Activated CD4-positive, alpha-beta T cell treated with anti-CD3 and anti-CD28 coated beads for 36 hours (primary cell): ENCODE measurements at regions of chr5 and their contacts with region 1.

Region 1: DNA sequence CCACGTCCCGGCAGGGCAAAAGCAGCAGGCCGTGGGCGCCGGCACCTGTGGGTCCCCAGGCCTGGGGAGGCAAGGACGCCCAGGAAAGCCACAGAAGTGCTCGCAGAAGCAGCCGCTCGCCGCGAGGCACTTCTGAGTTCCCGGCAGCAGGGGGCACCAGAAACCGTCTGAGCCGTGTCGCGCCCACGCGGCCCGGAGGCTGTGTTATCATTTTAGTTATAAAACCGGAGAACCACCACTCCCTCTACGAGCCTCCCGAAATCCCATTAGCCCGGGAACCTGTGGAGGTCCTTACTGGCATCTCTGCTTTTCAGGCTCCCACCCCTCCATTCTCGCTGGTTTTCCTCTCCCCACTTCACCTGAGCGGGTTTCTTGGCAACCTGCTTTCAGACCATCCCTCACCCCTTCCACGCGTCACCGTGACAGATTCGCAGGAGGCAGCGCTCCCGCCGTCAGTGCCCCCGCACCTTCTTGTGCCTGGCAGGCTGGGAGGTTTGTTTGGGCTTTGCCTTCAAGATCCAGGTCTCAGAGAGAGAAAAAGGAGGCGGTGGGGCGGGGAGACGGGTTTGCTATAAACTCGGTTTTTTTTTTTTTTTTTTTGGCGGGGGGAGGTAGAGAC is 2.3 kb downstream of the GDNF start:
- DNase-seq: peak; percentile 90
- ATAC-seq: peak; percentile 69
- H3K4me3 Mint-ChIP-seq: peak overlapping the region; percentile 55
- H3K27ac Mint-ChIP-seq: no peak overlapping the region
- H3K4me1 Mint-ChIP-seq: peaks cover 28% of the 10 kb centered on the region
- H3K27me3 Mint-ChIP-seq: peaks cover 77% of the 10 kb centered on the region

Region 2: DNA sequence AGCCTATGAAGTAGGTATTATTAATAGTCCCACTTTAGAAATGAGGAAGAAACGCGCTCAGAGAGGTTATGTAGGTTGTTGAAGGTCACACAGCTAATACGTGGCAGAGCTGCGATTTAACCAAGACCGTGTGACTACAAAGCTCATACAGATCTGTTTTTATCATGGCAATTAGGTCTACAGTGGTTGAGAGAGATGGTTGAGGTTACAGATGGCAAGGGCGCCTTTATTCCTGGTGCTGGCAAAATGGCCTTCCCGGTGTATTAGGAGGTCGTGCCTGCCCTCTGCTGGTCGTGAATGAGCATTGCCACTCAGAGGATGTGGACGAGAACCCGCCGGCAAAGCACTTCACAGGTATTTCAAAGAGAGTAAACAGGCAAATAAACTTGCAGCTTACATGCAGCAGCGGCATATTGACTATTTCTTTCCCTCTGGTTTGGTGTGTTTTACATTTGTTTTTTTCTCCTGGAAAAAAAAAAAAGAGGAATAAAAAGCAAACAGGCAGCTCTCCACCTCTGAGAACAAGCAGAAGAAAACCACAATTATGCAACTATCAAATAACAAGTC is 355.6 kb after region 1 on chr5:
- CTCF ChIA-PET with region 1: interaction called, 25 read pairs
- POLR2A ChIA-PET with region 1: no interaction called
- intact Hi-C with region 1: loop called (anchors 1 kb)
- DNase-seq: peak; percentile 78
- ATAC-seq: peak; percentile 77
- H3K4me3 Mint-ChIP-seq: no peak overlapping the region
- H3K27ac Mint-ChIP-seq: no peak overlapping the region
- H3K4me1 Mint-ChIP-seq: peaks cover 4% of the 10 kb centered on the region
- H3K27me3 Mint-ChIP-seq: peaks cover 21% of the 10 kb centered on the region

Region 3: DNA sequence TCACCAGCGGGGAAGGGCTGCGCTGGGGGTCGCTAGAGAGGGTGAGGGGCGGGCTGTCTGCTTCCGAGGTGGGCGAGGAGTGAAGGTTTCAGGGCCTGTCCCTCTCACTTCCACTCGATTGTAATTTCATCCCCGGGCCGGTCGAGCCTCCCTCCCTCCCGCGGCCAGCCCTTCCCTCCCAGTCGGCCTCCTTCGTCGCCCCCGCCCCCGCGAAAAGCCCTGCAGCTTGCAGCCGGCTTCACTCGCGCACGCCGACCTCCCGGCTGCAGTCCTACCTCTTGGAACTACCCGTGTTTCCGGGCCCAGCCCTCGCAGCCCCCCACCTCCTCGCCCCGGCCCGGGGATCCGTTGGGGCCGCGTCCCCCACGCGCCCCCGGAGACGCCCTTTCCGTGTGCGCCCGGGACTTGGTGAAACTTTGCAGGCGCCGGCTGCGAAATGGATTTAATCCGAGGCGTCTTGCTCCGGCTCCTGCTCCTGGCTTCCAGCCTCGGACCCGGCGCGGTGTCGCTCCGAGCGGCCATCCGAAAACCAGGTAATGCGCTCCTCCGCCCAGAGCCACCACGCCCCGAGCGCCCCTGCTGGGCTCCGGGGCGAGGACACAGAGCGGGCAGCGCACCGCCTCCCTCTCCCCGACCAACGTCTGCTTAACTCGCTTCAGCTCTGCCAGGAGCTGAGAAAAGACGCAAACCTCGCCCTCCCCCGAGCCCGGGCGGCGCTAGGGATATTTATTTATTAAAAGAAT is 421.0 kb after region 1 on chr5 and contains the start of gene EGFLAM:
- CTCF ChIA-PET with region 1: no interaction called
- POLR2A ChIA-PET with region 1: no interaction called
- intact Hi-C with region 1: loop called in 1 of 2 experiments (anchors 5 kb)
- DNase-seq: peak; percentile 40
- ATAC-seq: peak; percentile 49
- H3K4me3 Mint-ChIP-seq: peak within 1 kb of the TSS; percentile 18
- H3K27ac Mint-ChIP-seq: no peak within 1 kb of the TSS
- H3K4me1 Mint-ChIP-seq: peaks cover 8% of the 10 kb centered on the region
- H3K27me3 Mint-ChIP-seq: peaks cover 55% of the 10 kb centered on the region
- total RNA-seq, gene EGFLAM: not detected